CD8-positive, alpha-beta T cell (primary cell): ENCODE measurements at regions of chr6 and their contacts with region 1.

Region 1: GRCh38 chr6:132798869-132799538 is 567 bp upstream of the SLC18B1 start:
- DNase-seq: peak; percentile 41 to 85 (median 70)
- ATAC-seq: peak; percentile 80
- H3K4me3 ChIP-seq: peak overlapping the region in 1 of 2 experiments; percentile 91
- H3K4me3 Mint-ChIP-seq: no peak overlapping the region
- H3K27ac ChIP-seq: peak overlapping the region in 1 of 2 experiments; percentile 55
- H3K27ac Mint-ChIP-seq: no peak overlapping the region
- H3K4me1 ChIP-seq: peaks cover 5% of the 10 kb centered on the region
- H3K4me1 Mint-ChIP-seq: peaks cover 29% of the 10 kb centered on the region
- H3K27me3 ChIP-seq: no peaks in the 10 kb centered on the region
- H3K27me3 Mint-ChIP-seq: no peaks in the 10 kb centered on the region
- CTCF ChIP-seq: peak; percentile 72

Region 2: DNA sequence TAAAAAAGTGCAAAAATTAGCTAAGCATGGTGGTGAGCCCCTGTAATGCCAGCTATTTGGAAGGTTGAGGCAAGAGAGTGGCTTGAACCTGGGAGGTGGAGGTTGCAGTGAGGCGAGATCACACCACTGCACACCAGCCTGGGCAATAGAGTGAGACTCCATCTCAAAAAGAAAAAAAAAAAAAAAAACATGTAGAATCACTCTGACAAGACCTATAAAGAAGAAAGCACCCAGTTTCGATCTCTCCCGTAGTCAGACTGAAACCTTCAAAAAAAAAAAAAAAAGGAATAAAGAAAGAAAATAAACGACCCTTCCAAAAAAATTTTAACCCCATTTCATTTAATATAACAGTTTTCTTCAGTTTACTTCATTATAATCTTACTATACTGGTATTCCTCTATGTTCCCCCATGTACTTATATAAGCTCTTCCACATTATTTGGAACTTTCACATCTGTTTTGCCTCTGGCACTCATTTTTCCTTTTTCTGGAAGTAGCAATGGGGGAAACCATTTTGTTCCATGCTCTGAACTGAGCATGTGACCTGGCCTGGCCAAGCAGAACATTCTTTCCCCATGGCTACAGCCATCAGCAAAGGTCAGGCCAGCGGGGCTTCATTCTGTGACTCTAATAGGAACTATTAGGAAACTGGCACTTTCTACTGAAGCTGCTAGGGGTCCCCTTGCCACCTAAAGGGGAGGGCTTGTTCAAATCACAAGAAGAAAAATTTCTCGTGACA is 10.2 kb before region 1 on chr6:
- CTCF ChIA-PET with region 1: interaction called, 24 read pairs
- POLR2A ChIA-PET with region 1: interaction called, 8 read pairs
- intact Hi-C with region 1: no loop called
- DNase-seq: no peak
- ATAC-seq: no peak
- H3K4me3 ChIP-seq: no peak overlapping the region
- H3K4me3 Mint-ChIP-seq: no peak overlapping the region
- H3K27ac ChIP-seq: no peak overlapping the region
- H3K27ac Mint-ChIP-seq: no peak overlapping the region
- H3K4me1 ChIP-seq: no peaks in the 10 kb centered on the region
- H3K4me1 Mint-ChIP-seq: peaks cover 14% of the 10 kb centered on the region
- H3K27me3 ChIP-seq: no peaks in the 10 kb centered on the region
- H3K27me3 Mint-ChIP-seq: no peaks in the 10 kb centered on the region
- CTCF ChIP-seq: no peak

Region 3: DNA sequence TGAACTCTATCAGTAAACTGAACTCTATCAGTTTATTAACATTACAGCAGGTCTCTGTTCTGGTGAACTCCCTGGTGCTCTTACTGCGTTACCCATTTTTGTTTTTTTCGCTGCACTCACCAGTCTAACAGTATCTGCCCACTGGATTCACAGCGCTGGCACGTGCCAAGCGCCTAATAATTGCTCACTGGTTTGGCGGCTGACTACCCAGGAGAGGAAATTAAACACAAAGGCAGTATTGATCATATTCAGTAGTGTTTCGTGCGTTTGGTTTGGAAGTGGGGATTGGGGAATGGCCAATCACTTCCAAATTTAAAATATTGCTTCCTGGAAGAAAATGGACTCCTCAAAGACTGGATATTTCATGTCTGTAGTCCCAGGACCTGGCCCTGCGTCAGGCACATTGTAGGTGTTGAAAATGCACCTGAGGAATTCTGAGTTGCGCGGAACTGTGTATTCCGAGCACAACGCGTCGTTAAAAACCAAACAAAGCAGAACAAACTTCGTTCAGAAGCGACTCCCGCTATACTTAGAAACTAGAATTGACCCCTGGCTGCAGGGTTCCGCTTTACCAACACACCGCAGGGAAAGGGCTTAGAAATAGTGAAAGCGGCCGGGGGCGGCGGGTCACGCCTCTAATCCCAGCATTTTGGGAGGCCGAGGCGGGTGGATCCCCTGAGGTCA is 14.3 kb after region 1 on chr6:
- CTCF ChIA-PET with region 1: interaction called, 44 read pairs
- POLR2A ChIA-PET with region 1: interaction called, 87 read pairs
- intact Hi-C with region 1: loop called (anchors 1 kb)
- DNase-seq: peak in 8 of 9 experiments; percentile 23 to 81 (median 40)
- ATAC-seq: peak; percentile 17
- H3K4me3 ChIP-seq: peak overlapping the region; percentile 83 to 87
- H3K4me3 Mint-ChIP-seq: peak overlapping the region; percentile 97
- H3K27ac ChIP-seq: peak overlapping the region; percentile 69 to 87
- H3K27ac Mint-ChIP-seq: peak overlapping the region; percentile 99
- H3K4me1 ChIP-seq: peaks cover 25% of the 10 kb centered on the region
- H3K4me1 Mint-ChIP-seq: peaks cover 49% of the 10 kb centered on the region
- H3K27me3 ChIP-seq: no peaks in the 10 kb centered on the region
- H3K27me3 Mint-ChIP-seq: no peaks in the 10 kb centered on the region
- CTCF ChIP-seq: no peak

Region 4: GRCh38 chr6:133587546-133588160 is 788.6 kb after region 1 on chr6:
- CTCF ChIA-PET with region 1: no interaction called
- POLR2A ChIA-PET with region 1: no interaction called
- intact Hi-C with region 1: no loop called
- DNase-seq: no peak
- ATAC-seq: no peak
- H3K4me3 ChIP-seq: no peak overlapping the region
- H3K4me3 Mint-ChIP-seq: no peak overlapping the region
- H3K27ac ChIP-seq: no peak overlapping the region
- H3K27ac Mint-ChIP-seq: no peak overlapping the region
- H3K4me1 ChIP-seq: no peaks in the 10 kb centered on the region
- H3K4me1 Mint-ChIP-seq: no peaks in the 10 kb centered on the region
- H3K27me3 ChIP-seq: no peaks in the 10 kb centered on the region
- H3K27me3 Mint-ChIP-seq: no peaks in the 10 kb centered on the region
- CTCF ChIP-seq: no peak